ENCODE measurements at regions of chr21 and their contacts with region 1.

Region 1: GRCh38 chr21:38805328-38806152 is at the start of gene ETS2:
- DNase-seq: peak; percentile 96
- ATAC-seq: peak; percentile 93
- total RNA-seq, gene ETS2: 51.5 TPM

Region 2: DNA sequence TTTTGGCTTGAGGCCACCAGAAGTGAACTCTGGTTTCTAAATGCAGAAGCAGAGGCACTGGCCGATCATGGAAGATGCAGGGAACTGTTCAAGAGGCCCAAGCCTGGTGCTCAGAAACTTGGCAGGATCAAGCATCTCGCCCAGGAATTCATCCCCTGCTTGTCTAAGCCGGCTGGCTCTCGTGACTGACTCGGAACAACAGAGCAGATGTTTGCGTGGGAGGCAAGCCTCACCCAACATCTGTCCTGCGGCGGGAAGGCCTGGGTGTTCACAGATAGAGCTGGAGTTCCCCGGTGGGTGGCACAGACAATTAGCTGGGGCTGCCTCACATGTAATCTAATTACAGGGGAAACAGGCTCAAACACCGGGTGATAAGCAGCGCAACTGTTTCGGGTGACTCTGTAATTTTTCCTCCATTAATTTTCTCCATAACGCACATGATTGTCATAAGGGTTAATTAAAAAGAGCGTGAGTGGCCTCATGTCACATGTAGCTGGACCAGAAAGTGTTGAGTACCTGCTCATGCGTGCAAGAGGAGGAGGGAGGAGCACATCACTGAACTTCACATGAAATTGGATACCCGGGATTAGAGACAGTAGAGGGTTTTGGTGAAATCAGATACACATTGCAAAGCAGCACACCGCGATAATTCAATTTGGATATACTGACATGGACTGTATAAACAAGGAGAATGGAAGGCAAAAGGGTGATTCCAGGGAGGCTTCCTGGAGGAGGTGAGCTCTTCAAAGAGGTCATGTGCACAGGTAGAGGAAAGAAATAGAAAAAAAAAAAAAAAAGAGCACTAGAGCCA is 180.2 kb after region 1 on chr21:
- intact Hi-C with region 1: loop called (anchors 5 kb)
- DNase-seq: peak; percentile 85
- ATAC-seq: peak; percentile 72

Region 3: GRCh38 chr21:39022863-39023693 is 217.5 kb after region 1 on chr21:
- intact Hi-C with region 1: loop called (anchors 1 kb)
- DNase-seq: peak; percentile 85
- ATAC-seq: peak; percentile 89

Region 4: GRCh38 chr21:39088831-39089380 is 283.4 kb after region 1 on chr21:
- intact Hi-C with region 1: loop called (anchors 2 kb)
- DNase-seq: no peak
- ATAC-seq: no peak